ENCODE measurements at regions of chr9 and their contacts with region 1.

Region 1: GRCh38 chr9:70411930-70412831 is 2.3 kb downstream of the KLF9 start:
- DNase-seq: peak; percentile 76
- ATAC-seq: peak; percentile 60

Region 2: DNA sequence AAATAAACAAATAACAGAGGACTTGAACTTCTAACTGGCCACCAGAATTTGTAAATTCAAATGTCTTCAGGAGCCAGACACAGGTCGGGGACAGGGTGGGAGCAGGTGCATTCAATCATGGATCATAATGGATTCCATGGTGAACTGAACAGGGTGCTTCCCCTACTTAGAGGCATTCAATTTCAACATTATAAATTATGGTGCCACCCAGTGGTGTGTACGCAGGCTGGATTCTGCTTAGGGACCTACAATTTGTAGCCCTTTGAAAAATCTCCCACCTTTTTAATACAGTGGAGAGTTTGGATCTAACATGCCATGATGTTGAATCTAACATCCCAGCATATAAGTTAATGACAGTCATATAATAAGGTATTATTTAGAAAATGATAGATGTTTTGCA is 20.0 kb before region 1 on chr9:
- intact Hi-C with region 1: loop called (anchors 2 kb)
- DNase-seq: no peak
- ATAC-seq: peak; percentile 45

Region 3: GRCh38 chr9:70504834-70505233 is 92.7 kb after region 1 on chr9:
- intact Hi-C with region 1: no loop called
- DNase-seq: no peak
- ATAC-seq: no peak

Measured in Right ventricle myocardium inferior (tissue), 1 donor.